ENCODE measurements at regions of chr17 and their contacts with region 1.

Region 1: GRCh38 chr17:39209317-39210092 is 9.4 kb downstream of the RPL19 start:
- DNase-seq: no peak
- ATAC-seq: no peak
- H3K4me3 ChIP-seq: no peak overlapping the region
- H3K27ac ChIP-seq: no peak overlapping the region
- H3K4me1 ChIP-seq: no peaks in the 10 kb centered on the region
- H3K27me3 ChIP-seq: peaks cover 13 to 58% of the 10 kb centered on the region in 2 experiments; a peak in 4 of 5 replicates
- CTCF ChIP-seq: no peak
- EP300 ChIP-seq: no peak
- POLR2A ChIP-seq: no peak
- RAD21 ChIP-seq: no peak

Region 2: DNA sequence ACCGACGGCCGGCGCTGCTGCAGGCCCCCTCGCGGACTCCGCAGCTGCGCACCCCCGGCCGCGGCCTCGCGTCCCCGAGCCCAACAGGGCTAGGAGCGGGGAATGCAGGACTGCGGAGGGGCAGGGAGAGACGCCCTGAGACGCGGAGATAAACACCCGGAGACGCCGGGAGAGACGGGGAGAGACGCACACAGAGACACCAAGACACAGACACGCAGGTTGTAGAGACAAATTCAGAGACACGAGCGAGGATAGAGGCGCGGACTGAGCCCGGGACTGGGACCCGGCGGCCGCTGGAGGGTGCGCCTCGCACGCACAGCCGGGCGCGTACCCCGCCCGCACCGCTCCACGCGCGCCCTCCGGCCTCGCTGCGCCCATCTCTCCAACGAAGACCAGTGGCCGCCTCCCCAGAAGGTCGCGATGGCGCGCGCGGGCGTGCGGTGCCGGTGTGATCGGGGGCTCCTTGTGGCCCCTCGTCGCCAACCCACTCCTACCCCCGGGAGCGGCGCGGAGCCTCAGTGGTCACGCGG is 15.3 kb after region 1 on chr17:
- CTCF ChIA-PET with region 1: no interaction called
- POLR2A ChIA-PET with region 1: no interaction called
- in situ Hi-C with region 1: no loop called
- intact Hi-C with region 1: no loop called
- DNase-seq: no peak
- ATAC-seq: peak; percentile 15
- H3K4me3 ChIP-seq: peak overlapping the region in 1 of 3 experiments; percentile 16; a peak in 1 of 6 replicates
- H3K27ac ChIP-seq: no peak overlapping the region
- H3K4me1 ChIP-seq: peaks cover 6% of the 10 kb centered on the region; the same call in 1 of the 2 replicates
- H3K27me3 ChIP-seq: peaks cover 26 to 76% of the 10 kb centered on the region in 2 experiments
- CTCF ChIP-seq: no peak
- EP300 ChIP-seq: no peak
- POLR2A ChIP-seq: no peak
- RAD21 ChIP-seq: no peak

Region 3: GRCh38 chr17:39235555-39236449 is 26.3 kb after region 1 on chr17:
- CTCF ChIA-PET with region 1: interaction called, 18 read pairs
- POLR2A ChIA-PET with region 1: interaction called, 7 read pairs
- in situ Hi-C with region 1: no loop called
- intact Hi-C with region 1: no loop called
- DNase-seq: peak; percentile 60
- ATAC-seq: peak; percentile 55
- H3K4me3 ChIP-seq: no peak overlapping the region
- H3K27ac ChIP-seq: no peak overlapping the region
- H3K4me1 ChIP-seq: peaks cover 14% of the 10 kb centered on the region; the same call in 1 of the 2 replicates
- H3K27me3 ChIP-seq: peaks cover 2 to 24% of the 10 kb centered on the region in 2 experiments; a peak in 4 of 5 replicates
- CTCF ChIP-seq: peak; percentile 78
- EP300 ChIP-seq: no peak
- POLR2A ChIP-seq: no peak
- RAD21 ChIP-seq: peak; percentile 18; the same call in 1 of the 2 replicates